ENCODE measurements at regions of chr7 and their contacts with region 1.

Region 1: GRCh38 chr7:21253740-21254687 is 173.9 kb upstream of the SP4 start:
- DNase-seq: no peak
- ATAC-seq: no peak

Region 2: GRCh38 chr7:20778063-20778721 is 475.8 kb before region 1 on chr7:
- intact Hi-C with region 1: loop called (anchors 2 kb)
- DNase-seq: no peak
- ATAC-seq: peak; percentile 74

Region 3: DNA sequence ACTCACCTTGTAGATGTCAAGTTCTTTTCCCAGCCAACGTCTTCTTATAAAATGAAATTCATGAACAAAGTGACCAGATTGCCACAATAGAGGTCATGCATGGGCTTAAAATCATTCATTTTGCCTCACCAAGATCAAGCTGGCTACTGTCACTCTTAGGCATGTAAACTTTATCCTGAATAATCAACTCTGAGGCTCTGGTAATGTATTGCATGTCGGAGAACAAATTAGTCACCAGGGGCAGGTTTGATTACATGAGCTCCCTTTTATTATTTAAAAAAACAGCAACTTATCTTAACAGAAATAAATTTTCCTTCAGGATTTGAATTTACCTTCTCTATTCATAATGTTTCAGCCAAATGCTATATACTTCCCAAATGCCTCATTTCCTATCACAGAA is 60.9 kb after region 1 on chr7:
- intact Hi-C with region 1: no loop called
- DNase-seq: no peak
- ATAC-seq: no peak

Region 4: GRCh38 chr7:21486511-21486910 is 232.5 kb after region 1 on chr7:
- intact Hi-C with region 1: no loop called
- DNase-seq: no peak
- ATAC-seq: no peak

Region 5: DNA sequence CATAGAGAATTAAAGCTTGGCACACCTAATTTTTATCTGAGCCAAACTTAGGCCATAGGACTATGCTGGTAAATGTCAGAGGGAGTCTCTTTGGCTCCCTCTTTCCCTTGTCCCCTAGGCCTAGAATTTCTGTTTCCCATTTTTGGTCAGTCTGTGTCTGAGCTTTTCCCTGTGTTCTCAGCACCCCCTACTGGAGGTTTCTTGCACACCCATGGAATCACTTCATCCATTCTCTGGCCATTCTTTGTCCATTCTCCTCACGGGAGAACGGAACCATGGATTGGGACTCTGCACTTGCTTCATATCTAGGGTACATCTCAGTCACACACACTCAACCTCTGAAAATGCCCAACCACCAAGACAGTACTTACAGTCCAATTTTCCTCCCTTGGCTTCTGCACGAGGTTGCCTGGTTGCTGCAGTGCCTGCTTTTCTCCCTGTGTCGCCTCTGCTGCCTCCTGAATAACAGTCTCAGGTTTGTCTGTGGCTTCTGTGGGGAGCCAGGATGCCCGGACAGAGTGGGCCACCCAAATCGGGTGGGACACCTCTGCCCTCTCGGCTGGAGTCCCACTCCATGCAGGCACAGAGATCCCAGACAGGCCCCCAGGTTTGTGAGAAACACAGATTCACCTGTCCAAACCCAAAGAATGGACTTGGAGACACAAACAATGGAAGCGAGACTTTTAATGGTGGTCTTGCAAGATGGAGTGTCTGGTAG is 253.8 kb after region 1 on chr7:
- intact Hi-C with region 1: loop called (anchors 5 kb)
- DNase-seq: no peak
- ATAC-seq: no peak

Region 6: GRCh38 chr7:21568762-21569161 is 314.7 kb after region 1 on chr7:
- intact Hi-C with region 1: no loop called
- DNase-seq: no peak
- ATAC-seq: no peak

Region 7: DNA sequence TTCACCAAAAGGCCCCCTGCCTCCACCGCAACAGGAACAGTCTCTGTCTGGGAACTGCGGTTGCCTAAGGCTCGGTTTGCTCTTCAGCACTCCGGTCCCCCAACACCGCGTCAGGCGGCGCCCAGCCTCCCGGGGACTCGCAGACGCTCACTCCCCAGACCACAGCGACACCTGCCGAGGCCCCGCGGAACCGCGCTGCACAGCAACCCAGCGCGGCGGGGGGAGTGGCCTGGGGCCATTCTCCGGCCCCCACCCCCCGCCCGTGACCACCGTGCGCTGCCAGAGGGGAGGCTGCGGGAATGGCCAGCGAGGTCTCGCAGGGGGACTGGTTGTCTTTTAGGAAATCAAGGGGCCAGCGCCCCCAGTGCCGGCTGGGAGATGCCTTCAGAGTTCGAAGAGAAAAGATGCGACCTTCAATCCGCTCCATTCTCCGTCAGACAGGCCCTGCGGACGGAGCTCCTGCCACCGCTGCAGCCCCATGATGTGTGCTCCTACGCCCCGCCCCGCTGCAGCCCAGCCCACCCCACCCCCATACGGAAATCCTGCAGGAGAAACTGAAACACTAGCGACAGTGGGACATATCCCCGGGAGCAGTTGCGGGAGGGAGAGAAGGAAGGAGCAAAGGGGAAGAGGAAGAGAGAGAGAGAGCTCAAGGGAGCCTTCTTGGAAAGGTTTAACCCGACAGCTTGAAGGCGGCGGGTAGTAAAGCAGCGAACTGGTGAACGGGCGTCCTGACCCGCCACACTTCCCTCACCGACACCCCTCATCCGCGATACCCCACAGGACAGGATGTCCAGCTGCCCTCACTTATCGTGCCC is 829.1 kb after region 1 on chr7:
- intact Hi-C with region 1: loop called (anchors 10 kb)
- DNase-seq: peak; percentile 93
- ATAC-seq: peak; percentile 99

Measured in Right ventricle myocardium inferior (tissue), 1 donor.